ENCODE measurements at regions of chr7 and their contacts with region 1.

Region 1: DNA sequence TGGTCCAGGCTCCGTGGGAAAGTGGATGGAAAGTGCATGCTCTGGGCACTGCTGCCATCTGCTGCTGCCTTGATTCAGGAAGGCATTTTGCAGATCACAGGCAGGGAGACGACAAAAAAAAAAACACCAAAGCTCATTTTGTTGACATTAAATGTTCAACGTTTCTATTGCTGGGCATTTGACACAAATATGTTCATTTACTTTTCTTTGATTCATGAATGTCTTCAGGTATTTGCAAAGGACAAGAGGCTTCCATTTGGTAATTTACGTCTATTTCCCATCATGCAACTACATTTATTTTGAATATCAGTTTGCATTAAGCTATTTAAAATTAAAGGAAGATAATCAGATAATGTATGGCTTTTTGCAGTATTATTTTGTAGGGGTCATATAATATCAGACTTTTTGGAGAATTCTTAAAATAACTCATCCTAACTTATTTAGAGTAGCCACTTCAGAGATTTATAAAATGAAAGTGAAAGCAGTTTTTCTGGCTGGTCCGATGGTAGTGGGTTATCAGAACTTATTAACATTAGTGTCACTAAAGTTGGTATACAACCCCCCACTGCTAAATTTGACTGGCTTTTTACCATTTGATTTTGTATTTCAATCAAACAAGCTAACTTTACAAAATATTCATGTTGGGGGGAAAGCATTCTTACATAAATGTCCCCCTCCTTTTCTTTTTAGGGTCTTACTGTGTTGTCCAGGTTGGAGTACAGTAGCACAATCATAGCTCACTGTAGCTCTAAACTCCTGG is 65.3 kb downstream of the PDIA4 start:
- DNase-seq: peak; percentile 46 to 85
- ATAC-seq: peak; percentile 59 to 70 (median 69)
- H3K4me3 ChIP-seq: peak overlapping the region; percentile 80
- H3K4me3 Mint-ChIP-seq: peak overlapping the region; percentile 92
- H3K27ac ChIP-seq: peak overlapping the region; percentile 76
- H3K27ac Mint-ChIP-seq: peak overlapping the region; percentile 83 to 95
- H3K4me1 ChIP-seq: peaks cover 28% of the 10 kb centered on the region
- H3K4me1 Mint-ChIP-seq: peaks cover 30 to 32% of the 10 kb centered on the region in 2 donors
- H3K27me3 ChIP-seq: no peaks in the 10 kb centered on the region
- H3K27me3 Mint-ChIP-seq: no peaks in the 10 kb centered on the region
- CTCF ChIP-seq: peak; percentile 76

Region 2: DNA sequence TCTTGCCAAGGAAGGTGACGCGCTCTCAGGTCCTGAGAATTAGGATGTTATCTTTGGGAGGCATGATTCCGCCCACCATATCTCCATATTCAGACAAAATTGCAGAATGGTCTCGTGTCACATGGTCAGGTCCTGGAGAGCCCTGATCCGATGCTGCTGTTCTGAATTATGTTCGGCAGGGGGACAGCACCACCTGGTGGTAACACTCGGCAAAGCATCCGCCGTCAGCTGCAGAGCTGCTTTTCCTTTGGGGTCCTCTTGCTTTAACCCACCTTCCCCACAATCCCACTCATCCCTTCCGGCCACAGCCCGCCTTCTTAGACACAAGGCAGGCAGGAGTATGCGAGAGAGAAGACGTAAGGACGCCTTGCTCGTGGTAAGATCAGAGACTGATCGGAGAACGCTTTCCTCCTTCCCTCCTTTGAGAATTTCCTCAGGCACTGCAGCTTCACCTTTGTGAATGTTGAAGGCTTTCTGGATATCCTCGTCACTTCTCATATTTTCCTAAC is 700.2 kb before region 1 on chr7:
- intact Hi-C with region 1: loop called (anchors 5 kb)
- DNase-seq: peak; percentile 49 to 71
- ATAC-seq: peak; percentile 64 to 91 (median 69)
- H3K4me3 ChIP-seq: no peak overlapping the region
- H3K4me3 Mint-ChIP-seq: no peak overlapping the region
- H3K27ac ChIP-seq: no peak overlapping the region
- H3K27ac Mint-ChIP-seq: no peak overlapping the region
- H3K4me1 ChIP-seq: peaks cover 7% of the 10 kb centered on the region
- H3K4me1 Mint-ChIP-seq: peaks cover 11% of the 10 kb centered on the region in 2 donors
- H3K27me3 ChIP-seq: peaks cover 3% of the 10 kb centered on the region
- H3K27me3 Mint-ChIP-seq: peaks cover 9 to 17% of the 10 kb centered on the region in 2 donors
- CTCF ChIP-seq: peak; percentile 86

Region 3: GRCh38 chr7:148503875-148504487 is 459.0 kb before region 1 on chr7:
- intact Hi-C with region 1: loop called (anchors 1 kb)
- DNase-seq: peak in 1 of 2 donors; percentile 69
- ATAC-seq: peak in 1 of 3 donors; percentile 36
- H3K4me3 ChIP-seq: no peak overlapping the region
- H3K4me3 Mint-ChIP-seq: no peak overlapping the region
- H3K27ac ChIP-seq: no peak overlapping the region
- H3K27ac Mint-ChIP-seq: no peak overlapping the region
- H3K4me1 ChIP-seq: no peaks in the 10 kb centered on the region
- H3K4me1 Mint-ChIP-seq: peaks cover 0 to 5% of the 10 kb centered on the region in 2 donors
- H3K27me3 ChIP-seq: no peaks in the 10 kb centered on the region
- H3K27me3 Mint-ChIP-seq: peaks cover 14 to 30% of the 10 kb centered on the region in 2 donors
- CTCF ChIP-seq: peak; percentile 91

Region 4: GRCh38 chr7:148575640-148576411 is 387.2 kb before region 1 on chr7:
- intact Hi-C with region 1: loop called (anchors 1 kb)
- DNase-seq: peak; percentile 64 to 81
- ATAC-seq: peak; percentile 67 to 95 (median 92)
- H3K4me3 ChIP-seq: no peak overlapping the region
- H3K4me3 Mint-ChIP-seq: no peak overlapping the region
- H3K27ac ChIP-seq: no peak overlapping the region
- H3K27ac Mint-ChIP-seq: no peak overlapping the region
- H3K4me1 ChIP-seq: no peaks in the 10 kb centered on the region
- H3K4me1 Mint-ChIP-seq: peaks cover 0 to 7% of the 10 kb centered on the region in 2 donors
- H3K27me3 ChIP-seq: no peaks in the 10 kb centered on the region
- H3K27me3 Mint-ChIP-seq: peaks cover 3 to 11% of the 10 kb centered on the region in 2 donors
- CTCF ChIP-seq: peak; percentile 86

Region 5: GRCh38 chr7:148773334-148773733 is 189.7 kb before region 1 on chr7:
- intact Hi-C with region 1: loop called (anchors 5 kb)
- DNase-seq: peak; percentile 29 to 69
- ATAC-seq: peak; percentile 90 to 100 (median 94)
- H3K4me3 ChIP-seq: no peak overlapping the region
- H3K4me3 Mint-ChIP-seq: peak overlapping the region; percentile 84
- H3K27ac ChIP-seq: peak overlapping the region; percentile 69
- H3K27ac Mint-ChIP-seq: peak overlapping the region; percentile 85 to 88
- H3K4me1 ChIP-seq: peaks cover 20% of the 10 kb centered on the region
- H3K4me1 Mint-ChIP-seq: peaks cover 33 to 40% of the 10 kb centered on the region in 2 donors
- H3K27me3 ChIP-seq: no peaks in the 10 kb centered on the region
- H3K27me3 Mint-ChIP-seq: no peaks in the 10 kb centered on the region
- CTCF ChIP-seq: no peak

Region 6: DNA sequence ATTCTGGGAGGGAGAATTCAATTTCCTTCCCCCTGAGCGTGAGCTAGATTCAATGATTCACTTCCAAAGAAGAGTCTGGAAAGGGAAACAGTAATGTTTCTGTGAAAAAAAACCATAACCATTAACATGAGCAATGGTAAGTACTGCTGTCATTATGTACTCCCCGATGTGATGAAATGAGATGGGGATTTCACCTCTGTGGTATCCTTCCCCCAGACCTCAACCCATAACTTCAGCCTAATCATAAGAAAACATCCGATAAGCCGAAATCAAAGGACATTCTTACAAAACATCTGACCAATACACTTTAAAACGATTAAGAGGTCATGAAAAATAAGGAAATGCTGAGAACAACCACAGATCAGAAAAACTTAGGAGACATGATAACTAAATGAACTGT is 106.1 kb before region 1 on chr7:
- intact Hi-C with region 1: loop called (anchors 2 kb)
- DNase-seq: peak in 1 of 2 donors; percentile 29
- ATAC-seq: peak; percentile 40 to 72 (median 60)
- H3K4me3 ChIP-seq: no peak overlapping the region
- H3K4me3 Mint-ChIP-seq: no peak overlapping the region
- H3K27ac ChIP-seq: no peak overlapping the region
- H3K27ac Mint-ChIP-seq: peak overlapping the region; percentile 30 to 74
- H3K4me1 ChIP-seq: no peaks in the 10 kb centered on the region
- H3K4me1 Mint-ChIP-seq: peaks cover 19 to 24% of the 10 kb centered on the region in 2 donors
- H3K27me3 ChIP-seq: no peaks in the 10 kb centered on the region
- H3K27me3 Mint-ChIP-seq: no peaks in the 10 kb centered on the region
- CTCF ChIP-seq: no peak